ENCODE measurements at regions of chr2 and their contacts with region 1.

Region 1: DNA sequence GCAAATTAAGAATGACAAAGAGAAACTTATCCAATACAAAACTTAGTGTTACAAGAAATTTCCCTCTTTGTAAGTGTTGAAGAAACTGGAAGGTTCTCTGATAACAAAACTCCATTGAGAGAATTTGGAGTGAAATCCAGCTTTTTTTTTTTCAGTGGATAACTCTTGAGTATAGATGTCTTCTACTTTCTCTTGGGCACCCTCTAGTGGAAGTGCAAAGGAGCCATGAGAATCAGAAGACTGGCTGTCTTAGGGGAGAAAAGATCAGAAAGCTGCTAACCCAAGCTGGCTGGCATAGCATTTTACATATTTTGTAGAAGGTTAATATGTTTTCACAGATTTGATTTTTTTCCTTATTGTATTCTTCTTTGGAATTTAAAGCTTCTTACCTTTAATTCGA is 138.8 kb upstream of the SATB2 start:
- DNase-seq: peak; percentile 21
- H3K4me3 ChIP-seq: no peak overlapping the region
- H3K27ac ChIP-seq: no peak overlapping the region
- H3K4me1 ChIP-seq: no peaks in the 10 kb centered on the region
- H3K27me3 ChIP-seq: peaks cover 3% of the 10 kb centered on the region
- CTCF ChIP-seq: peak; percentile 49 to 76

Region 2: DNA sequence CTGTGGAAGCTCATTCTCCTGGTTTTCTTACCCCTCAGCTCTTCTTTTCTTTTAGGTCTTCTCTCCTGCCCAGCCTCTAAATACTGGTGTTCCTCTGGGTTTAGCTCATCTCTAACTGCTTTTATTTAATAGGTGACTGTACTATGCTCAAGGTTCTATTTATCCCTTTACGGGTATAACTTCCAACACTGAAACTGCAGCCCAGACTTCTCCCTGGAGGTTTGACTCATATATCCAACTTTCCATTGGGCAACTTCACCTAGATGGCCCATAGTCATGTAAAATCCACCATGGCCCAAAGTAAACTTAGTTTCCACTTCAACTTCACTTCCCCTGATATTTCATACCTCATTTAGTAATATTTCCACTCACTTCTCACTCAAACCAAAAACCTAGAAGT is 1519.1 kb before region 1 on chr2:
- CTCF ChIA-PET with region 1: no interaction called
- dilution Hi-C with region 1: no loop called
- in situ Hi-C with region 1: no loop called
- intact Hi-C with region 1: no loop called
- DNase-seq: no peak
- H3K4me3 ChIP-seq: no peak overlapping the region
- H3K27ac ChIP-seq: no peak overlapping the region
- H3K4me1 ChIP-seq: no peaks in the 10 kb centered on the region
- H3K27me3 ChIP-seq: no peaks in the 10 kb centered on the region
- CTCF ChIP-seq: no peak

Region 3: GRCh38 chr2:198309673-198310280 is 1286.8 kb before region 1 on chr2:
- CTCF ChIA-PET with region 1: interaction called, 11 read pairs
- dilution Hi-C with region 1: no loop called
- in situ Hi-C with region 1: no loop called
- intact Hi-C with region 1: loop called (anchors 1 kb)
- DNase-seq: peak; percentile 27
- H3K4me3 ChIP-seq: no peak overlapping the region
- H3K27ac ChIP-seq: no peak overlapping the region
- H3K4me1 ChIP-seq: peaks cover 4% of the 10 kb centered on the region
- H3K27me3 ChIP-seq: peaks cover 1% of the 10 kb centered on the region
- CTCF ChIP-seq: peak; percentile 86 to 89

Region 4: DNA sequence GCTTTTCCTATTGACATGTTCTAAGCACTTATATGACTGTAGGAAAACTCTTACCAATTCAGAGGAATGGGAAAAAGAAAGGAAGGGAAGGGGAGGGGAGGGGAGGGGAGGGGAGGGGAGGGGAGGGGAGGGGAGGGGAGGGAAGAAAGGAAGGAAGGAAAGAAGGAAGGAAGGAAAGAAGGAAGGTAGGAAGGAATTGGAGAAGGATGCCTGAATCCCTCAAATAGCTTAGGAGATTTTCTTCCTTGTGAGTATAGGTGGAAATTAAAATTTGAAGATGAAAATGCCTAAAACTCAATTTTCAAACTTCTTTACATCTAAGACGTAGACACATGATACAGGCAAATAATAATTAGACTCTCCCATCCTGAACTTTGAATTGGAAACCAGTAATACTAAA is 601.9 kb before region 1 on chr2:
- CTCF ChIA-PET with region 1: interaction called, 41 read pairs
- dilution Hi-C with region 1: no loop called
- in situ Hi-C with region 1: no loop called
- intact Hi-C with region 1: no loop called
- DNase-seq: no peak
- H3K4me3 ChIP-seq: no peak overlapping the region
- H3K27ac ChIP-seq: no peak overlapping the region
- H3K4me1 ChIP-seq: no peaks in the 10 kb centered on the region
- H3K27me3 ChIP-seq: no peaks in the 10 kb centered on the region
- CTCF ChIP-seq: no peak

Region 5: DNA sequence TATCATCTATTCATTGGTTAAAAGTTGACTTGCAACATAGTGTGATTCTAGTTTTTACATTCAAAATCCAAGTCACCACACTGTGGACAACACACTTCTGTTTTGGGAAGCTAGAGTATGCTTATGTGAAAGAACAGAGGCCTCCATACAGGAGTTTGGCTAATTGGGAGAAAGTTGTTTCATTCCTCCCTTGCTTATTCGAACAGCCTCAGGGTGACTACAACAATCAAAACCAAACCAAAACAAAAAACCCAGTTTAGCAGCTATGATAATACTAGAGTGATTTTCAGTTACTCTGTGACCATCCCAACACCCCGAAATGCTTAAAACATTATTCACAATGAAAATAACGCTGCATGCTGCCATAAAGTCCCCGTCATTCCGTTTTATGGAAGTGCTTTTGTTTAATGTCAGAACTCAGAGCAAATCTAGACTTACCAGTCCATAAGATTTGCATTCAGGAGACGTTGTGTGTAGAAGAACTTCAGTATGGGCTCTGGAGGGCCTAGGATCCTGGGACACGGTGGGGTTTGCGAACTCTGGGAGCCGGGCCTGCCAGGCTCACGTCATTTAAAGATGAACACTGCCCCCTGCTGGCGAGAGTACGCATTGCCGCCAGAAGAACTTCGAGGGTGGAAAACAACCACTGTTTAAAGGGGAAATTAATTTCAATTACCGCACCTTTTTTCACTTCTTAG is 143.0 kb after region 1 on chr2:
- CTCF ChIA-PET with region 1: no interaction called
- dilution Hi-C with region 1: no loop called
- in situ Hi-C with region 1: no loop called
- intact Hi-C with region 1: loop called (anchors 10 kb)
- DNase-seq: peak; percentile 8
- H3K4me3 ChIP-seq: no peak overlapping the region
- H3K27ac ChIP-seq: no peak overlapping the region
- H3K4me1 ChIP-seq: no peaks in the 10 kb centered on the region
- H3K27me3 ChIP-seq: no peaks in the 10 kb centered on the region
- CTCF ChIP-seq: peak; percentile 82 to 83